Activated naive CD4-positive, alpha-beta T cell treated with anti-CD3 and anti-CD28 coated beads for 36 hours (primary cell): ENCODE measurements at regions of chr10 and their contacts with region 1.

Region 1: GRCh38 chr10:17643755-17644484 is at the start of gene STAM:
- DNase-seq: peak; percentile 93
- H3K4me3 Mint-ChIP-seq: peak within 1 kb of the TSS; percentile 88
- H3K27ac Mint-ChIP-seq: peak within 1 kb of the TSS; percentile 99
- H3K4me1 Mint-ChIP-seq: peaks cover 49% of the 10 kb centered on the region
- H3K27me3 Mint-ChIP-seq: no peaks in the 10 kb centered on the region
- total RNA-seq, gene STAM: 16.3 to 16.6 TPM

Region 2: GRCh38 chr10:16817125-16818019 is 826.5 kb before region 1 on chr10 and contains the start of gene RSU1:
- CTCF ChIA-PET with region 1: no interaction called
- intact Hi-C with region 1: loop called (anchors 1 kb)
- DNase-seq: peak; percentile 100
- H3K4me3 Mint-ChIP-seq: peak within 1 kb of the TSS; percentile 89
- H3K27ac Mint-ChIP-seq: peak within 1 kb of the TSS; percentile 90
- H3K4me1 Mint-ChIP-seq: peaks cover 23% of the 10 kb centered on the region
- H3K27me3 Mint-ChIP-seq: no peaks in the 10 kb centered on the region
- total RNA-seq, gene RSU1: 43.4 to 45.1 TPM

Region 3: DNA sequence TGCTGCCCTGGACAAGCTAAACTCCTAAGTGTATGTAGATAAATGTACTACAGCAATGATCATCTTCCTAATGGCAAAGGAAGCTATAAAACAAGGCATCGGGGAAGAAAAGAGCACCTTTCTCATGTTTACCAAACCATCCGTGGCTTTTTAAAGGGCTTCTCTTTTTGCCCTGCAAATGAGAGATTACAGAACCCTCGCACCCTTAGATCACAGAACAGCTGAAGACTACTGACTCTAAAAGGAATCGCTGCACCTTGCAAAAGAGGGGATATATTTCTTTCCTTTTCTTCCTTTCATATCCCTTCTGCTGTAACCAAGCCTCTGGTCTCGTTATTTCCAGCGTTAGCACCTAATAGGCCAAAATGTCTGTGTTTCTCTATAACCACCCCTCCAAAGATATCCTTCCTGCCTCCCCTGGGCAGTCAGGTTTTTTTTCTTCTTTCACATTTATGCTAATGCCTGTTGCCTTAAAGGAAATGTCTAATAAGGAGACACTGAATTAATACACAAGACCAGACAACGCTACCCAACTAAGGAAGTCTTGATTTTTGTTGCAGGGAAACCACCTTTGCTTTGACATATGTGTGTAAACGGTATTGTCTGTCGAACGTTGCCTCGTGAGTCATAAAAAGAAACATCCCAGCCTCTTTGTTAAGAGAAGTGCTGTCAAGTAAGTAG is 200.1 kb before region 1 on chr10:
- CTCF ChIA-PET with region 1: no interaction called
- intact Hi-C with region 1: loop called (anchors 1 kb)
- DNase-seq: peak; percentile 61
- H3K4me3 Mint-ChIP-seq: peak overlapping the region; percentile 46
- H3K27ac Mint-ChIP-seq: peak overlapping the region; percentile 28
- H3K4me1 Mint-ChIP-seq: peaks cover 16% of the 10 kb centered on the region
- H3K27me3 Mint-ChIP-seq: peaks cover 3% of the 10 kb centered on the region

Region 4: GRCh38 chr10:17617031-17617911 is 26.6 kb before region 1 on chr10 and contains the start of gene HACD1:
- CTCF ChIA-PET with region 1: interaction called, 4 read pairs
- intact Hi-C with region 1: loop called (anchors 1 kb)
- DNase-seq: peak; percentile 64
- H3K4me3 Mint-ChIP-seq: peak within 1 kb of the TSS; percentile 82
- H3K27ac Mint-ChIP-seq: no peak within 1 kb of the TSS
- H3K4me1 Mint-ChIP-seq: peaks cover 3% of the 10 kb centered on the region
- H3K27me3 Mint-ChIP-seq: peaks cover 12% of the 10 kb centered on the region
- total RNA-seq, gene HACD1: 0.41 to 1.9 TPM

Region 5: DNA sequence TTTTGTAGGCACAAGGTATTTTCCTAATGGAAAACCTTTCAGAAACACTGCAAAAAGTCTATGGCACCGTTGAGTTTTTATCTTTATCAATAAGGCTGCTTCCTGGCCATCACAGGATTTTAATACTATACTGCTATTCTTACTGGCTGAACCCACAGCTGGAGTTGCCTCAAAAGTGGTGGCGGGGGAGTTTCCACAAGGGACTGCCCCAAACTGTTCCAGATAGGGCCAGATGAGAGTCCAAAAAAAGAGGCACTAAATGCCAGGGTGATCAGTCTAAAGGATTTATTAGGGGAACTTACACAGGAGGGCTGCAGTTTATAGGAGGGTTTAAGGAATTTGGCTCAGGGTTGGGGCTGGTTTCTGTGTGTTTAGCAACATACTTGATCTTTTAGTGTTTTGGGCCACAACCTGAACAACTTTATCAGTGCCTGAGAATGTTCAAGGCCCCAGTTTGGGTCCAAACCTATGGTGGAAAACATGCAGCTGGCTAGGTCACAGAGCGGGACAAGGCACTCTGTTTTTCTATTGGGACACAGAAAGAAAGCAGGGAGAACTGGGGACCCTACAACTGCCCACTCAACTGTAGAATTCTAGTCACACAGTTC is 41.4 kb after region 1 on chr10:
- CTCF ChIA-PET with region 1: no interaction called
- intact Hi-C with region 1: loop called (anchors 2 kb)
- DNase-seq: peak; percentile 66
- H3K4me3 Mint-ChIP-seq: no peak overlapping the region
- H3K27ac Mint-ChIP-seq: peak overlapping the region; percentile 41
- H3K4me1 Mint-ChIP-seq: peaks cover 30% of the 10 kb centered on the region
- H3K27me3 Mint-ChIP-seq: no peaks in the 10 kb centered on the region

Region 6: GRCh38 chr10:18659120-18659818 is 1015.3 kb after region 1 on chr10 and contains the start of gene ARL5B:
- CTCF ChIA-PET with region 1: no interaction called
- intact Hi-C with region 1: loop called (anchors 2 kb)
- DNase-seq: peak; percentile 97
- H3K4me3 Mint-ChIP-seq: peak within 1 kb of the TSS; percentile 93
- H3K27ac Mint-ChIP-seq: peak within 1 kb of the TSS; percentile 98
- H3K4me1 Mint-ChIP-seq: peaks cover 36% of the 10 kb centered on the region
- H3K27me3 Mint-ChIP-seq: no peaks in the 10 kb centered on the region
- total RNA-seq, gene ARL5B: 13.8 to 14.1 TPM